HepG2 (cell line): ENCODE measurements at regions of chr5 and their contacts with region 1.

Region 1: GRCh38 chr5:172724242-172725183 is 46.5 kb downstream of the DUSP1 start:
- DNase-seq: peak; percentile 64
- ATAC-seq: peak; percentile 65
- H3K4me3 ChIP-seq: peak overlapping the region in 1 of 3 experiments; percentile 30; a peak in 2 of 6 replicates
- H3K27ac ChIP-seq: no peak overlapping the region
- H3K4me1 ChIP-seq: peaks cover 82% of the 10 kb centered on the region
- H3K27me3 ChIP-seq: peaks cover 4 to 28% of the 10 kb centered on the region in 2 experiments; a peak in 4 of 5 replicates
- CTCF ChIP-seq: no peak
- EP300 ChIP-seq: peak in 1 of 2 experiments; percentile 64; a peak in 1 of 4 replicates
- POLR2A ChIP-seq: no peak
- RAD21 ChIP-seq: no peak

Region 2: DNA sequence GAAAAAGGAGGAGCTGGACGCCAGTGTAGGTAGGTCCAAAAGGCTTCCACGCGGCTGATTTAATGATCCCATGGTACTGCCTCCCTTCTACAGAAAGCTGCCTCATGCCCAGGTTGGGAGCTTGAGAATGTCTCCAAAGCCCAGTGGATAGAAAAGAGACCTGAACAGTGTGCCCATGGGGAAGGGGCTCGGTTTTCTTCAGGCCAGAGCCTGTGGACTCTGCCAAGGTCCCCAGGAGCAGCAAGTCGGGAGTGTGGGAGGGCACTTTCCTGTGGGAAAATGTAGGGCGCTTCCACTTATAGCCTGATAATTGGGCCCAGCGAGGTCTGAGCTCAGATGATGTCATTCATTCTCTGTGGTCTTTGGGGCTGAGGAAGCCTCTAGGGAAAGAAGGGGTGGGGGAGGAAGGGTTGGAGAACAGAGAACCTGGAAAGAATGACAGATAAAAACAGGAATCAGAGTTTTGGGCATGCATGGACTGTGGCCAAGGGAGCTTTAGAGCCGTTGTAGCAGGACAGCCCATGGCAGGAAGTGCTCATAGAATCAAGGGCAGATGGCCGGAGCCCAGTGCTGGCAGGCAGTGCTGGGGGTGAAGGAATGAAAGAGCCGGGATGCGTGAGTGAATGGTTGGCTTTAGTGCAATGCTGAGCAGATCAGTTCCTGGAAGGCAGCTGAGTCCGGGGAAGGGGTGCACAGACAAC is 227.7 kb before region 1 on chr5:
- CTCF ChIA-PET with region 1: no interaction called
- POLR2A ChIA-PET with region 1: no interaction called
- in situ Hi-C with region 1: no loop called
- intact Hi-C with region 1: no loop called
- DNase-seq: no peak
- ATAC-seq: no peak
- H3K4me3 ChIP-seq: no peak overlapping the region
- H3K27ac ChIP-seq: no peak overlapping the region
- H3K4me1 ChIP-seq: no peaks in the 10 kb centered on the region
- H3K27me3 ChIP-seq: peaks cover 4 to 45% of the 10 kb centered on the region in 2 experiments; a peak in 4 of 5 replicates
- CTCF ChIP-seq: no peak
- EP300 ChIP-seq: no peak
- POLR2A ChIP-seq: no peak
- RAD21 ChIP-seq: no peak

Region 3: DNA sequence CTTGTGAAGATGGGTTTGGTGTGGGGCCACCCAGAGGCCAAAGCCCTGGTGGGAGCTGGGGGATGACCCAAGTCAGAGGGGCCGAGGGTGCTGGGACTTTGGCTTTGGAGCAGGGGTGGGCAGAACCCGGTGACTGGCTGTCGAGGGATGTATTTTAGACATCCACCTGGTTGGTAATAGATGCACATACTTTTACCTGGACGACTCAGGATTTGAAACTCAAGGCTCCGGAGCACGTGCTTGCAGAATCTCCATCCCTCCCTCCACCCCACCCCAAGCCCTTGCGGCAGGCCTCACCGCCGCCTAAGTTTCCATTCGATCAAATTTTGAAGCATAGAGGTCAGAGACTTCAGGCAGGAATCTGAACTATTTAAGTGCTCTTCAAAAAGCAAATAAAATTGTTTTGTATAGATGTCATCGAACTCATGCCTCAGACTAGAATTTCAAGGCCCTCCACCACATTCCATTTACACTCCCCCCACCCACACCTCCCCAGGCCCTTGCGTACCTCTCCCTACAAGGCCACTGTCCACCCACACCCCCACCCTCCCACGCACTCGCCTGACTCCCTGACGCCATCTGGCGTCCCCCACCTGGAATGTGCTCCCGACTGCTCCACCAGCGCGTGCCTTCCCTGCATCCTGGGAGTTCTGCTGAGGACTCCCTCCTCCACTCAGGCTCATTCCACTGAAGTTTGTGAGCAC is 178.1 kb after region 1 on chr5:
- CTCF ChIA-PET with region 1: no interaction called
- POLR2A ChIA-PET with region 1: no interaction called
- in situ Hi-C with region 1: loop called (anchors 5 kb)
- intact Hi-C with region 1: no loop called
- DNase-seq: peak; percentile 90
- ATAC-seq: peak; percentile 84
- H3K4me3 ChIP-seq: no peak overlapping the region; a peak in 1 of 6 replicates
- H3K27ac ChIP-seq: peak overlapping the region; percentile 70
- H3K4me1 ChIP-seq: peaks cover 44% of the 10 kb centered on the region
- H3K27me3 ChIP-seq: no peaks in the 10 kb centered on the region
- CTCF ChIP-seq: peak; percentile 97
- EP300 ChIP-seq: peak in 1 of 2 experiments; percentile 78; a peak in 2 of 4 replicates
- POLR2A ChIP-seq: no peak
- RAD21 ChIP-seq: peak; percentile 80